ENCODE measurements at regions of chr5 and their contacts with region 1.

Region 1: GRCh38 chr5:132813599-132814502 is 749 bp downstream of the SOWAHA start:
- DNase-seq: peak; percentile 34
- ATAC-seq: peak; percentile 78 to 87

Region 2: GRCh38 chr5:132639706-132640130 is 174.1 kb before region 1 on chr5:
- intact Hi-C with region 1: no loop called
- DNase-seq: no peak
- ATAC-seq: no peak

Region 3: GRCh38 chr5:132753135-132753987 is 60.5 kb before region 1 on chr5:
- intact Hi-C with region 1: loop called in 1 of 2 experiments (anchors 10 kb)
- DNase-seq: no peak
- ATAC-seq: no peak

Region 4: DNA sequence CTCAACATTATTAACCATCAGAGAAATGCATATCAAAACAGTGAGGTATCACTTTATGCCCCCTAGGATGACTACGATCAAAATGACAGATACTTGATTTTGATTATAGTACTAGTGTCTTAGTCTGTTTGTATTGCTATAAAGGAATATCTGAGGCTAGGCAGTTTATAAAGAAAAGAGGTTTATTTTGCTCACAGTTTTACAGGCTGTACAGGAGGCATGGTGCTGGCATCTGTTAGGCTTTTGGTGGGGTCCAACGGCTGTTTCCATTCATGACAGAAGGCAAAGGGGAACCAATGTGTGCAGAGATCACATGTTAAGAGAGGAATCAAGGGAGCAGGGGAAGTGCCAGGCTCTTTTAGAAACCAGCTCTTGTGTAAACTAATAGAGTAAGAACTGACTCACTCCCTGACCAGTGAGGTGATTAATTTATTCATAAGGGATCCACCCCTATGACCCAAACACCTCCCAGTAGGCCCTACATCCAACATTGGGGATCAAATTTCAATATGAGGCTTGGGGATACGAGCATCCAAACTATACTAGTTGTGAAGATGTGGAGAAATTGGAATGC is 165.6 kb after region 1 on chr5:
- intact Hi-C with region 1: no loop called
- DNase-seq: no peak
- ATAC-seq: no peak

Region 5: DNA sequence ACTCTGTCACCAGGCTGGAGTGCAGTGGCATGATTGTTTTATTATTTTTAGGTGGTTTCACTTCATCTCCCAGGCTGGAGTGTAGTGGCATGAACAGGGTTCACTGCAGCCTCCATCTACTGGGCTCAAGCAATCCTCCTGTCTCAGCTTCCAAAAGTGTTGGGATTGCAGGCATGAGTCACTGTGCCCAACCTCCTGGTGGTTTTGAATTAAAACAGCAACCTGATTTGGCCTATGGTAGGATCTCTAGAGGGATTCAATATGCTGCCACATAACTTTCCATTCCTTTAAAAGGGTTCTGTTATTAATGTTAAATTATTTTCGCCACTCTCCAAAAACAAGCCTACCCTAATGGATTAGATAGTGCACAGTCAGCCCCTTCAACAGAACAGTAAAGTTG is 228.1 kb after region 1 on chr5:
- intact Hi-C with region 1: no loop called
- DNase-seq: no peak
- ATAC-seq: no peak

Measured in left cardiac atrium (tissue), 4 donors.